SK-N-SH (cell line): ENCODE measurements at regions of chr17 and their contacts with region 1.

Region 1: DNA sequence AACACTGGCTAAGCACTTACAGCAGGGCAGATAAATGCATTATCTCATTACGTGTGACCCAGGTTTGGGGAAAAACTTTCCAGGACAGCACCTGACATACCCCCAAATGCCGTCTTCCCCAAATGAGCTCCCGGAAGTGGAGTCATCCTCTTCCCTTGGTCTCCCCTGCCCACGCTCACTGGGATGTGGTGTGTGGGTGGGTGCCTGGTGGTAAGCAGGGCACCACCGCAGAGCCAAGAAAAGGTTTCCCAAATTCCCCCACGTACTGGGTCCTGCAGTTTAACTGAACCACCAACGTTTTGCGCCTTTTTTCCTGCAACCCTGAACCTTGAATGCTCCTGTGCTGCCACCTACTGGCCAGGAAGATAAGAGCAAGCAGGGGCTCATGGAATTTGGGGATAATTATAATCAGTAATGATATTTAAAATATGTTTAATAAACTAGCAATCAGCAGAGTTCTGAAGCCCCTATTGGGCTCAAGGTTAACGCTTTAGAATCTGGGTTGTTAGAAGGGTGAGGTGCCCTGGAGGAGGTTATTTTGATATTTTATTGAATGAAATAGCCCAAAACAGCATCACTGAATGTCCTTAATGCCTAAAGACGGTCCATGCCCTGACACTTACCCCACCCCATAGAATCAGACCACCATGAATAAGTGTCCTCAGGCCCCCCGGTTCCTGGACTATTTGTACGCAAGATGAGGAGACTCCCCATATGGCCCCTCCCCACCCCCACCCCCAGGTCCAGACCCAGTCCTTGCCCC is 8.0 kb downstream of the SPPL2C start:
- DNase-seq: peak; percentile 84
- H3K4me3 ChIP-seq: no peak overlapping the region; a peak in 1 of 4 replicates
- H3K27ac ChIP-seq: no peak overlapping the region
- H3K4me1 ChIP-seq: peaks cover 0 to 15% of the 10 kb centered on the region in 2 experiments; a peak in 1 of 4 replicates
- H3K27me3 ChIP-seq: peaks cover 6% of the 10 kb centered on the region; the same call in 1 of the 2 replicates
- CTCF ChIP-seq: peak; percentile 100
- EP300 ChIP-seq: no peak
- RAD21 ChIP-seq: peak; percentile 97

Region 2: GRCh38 chr17:45394913-45395568 is 457.7 kb before region 1 on chr17:
- CTCF ChIA-PET with region 1: interaction called, 12 read pairs
- POLR2A ChIA-PET with region 1: no interaction called
- DNase-seq: peak; percentile 95
- H3K4me3 ChIP-seq: no peak overlapping the region; a peak in 1 of 4 replicates
- H3K27ac ChIP-seq: no peak overlapping the region
- H3K4me1 ChIP-seq: peaks cover 0 to 8% of the 10 kb centered on the region in 2 experiments; a peak in 1 of 4 replicates
- H3K27me3 ChIP-seq: no peaks in the 10 kb centered on the region
- CTCF ChIP-seq: peak; percentile 76
- EP300 ChIP-seq: no peak
- RAD21 ChIP-seq: peak; percentile 83

Region 3: DNA sequence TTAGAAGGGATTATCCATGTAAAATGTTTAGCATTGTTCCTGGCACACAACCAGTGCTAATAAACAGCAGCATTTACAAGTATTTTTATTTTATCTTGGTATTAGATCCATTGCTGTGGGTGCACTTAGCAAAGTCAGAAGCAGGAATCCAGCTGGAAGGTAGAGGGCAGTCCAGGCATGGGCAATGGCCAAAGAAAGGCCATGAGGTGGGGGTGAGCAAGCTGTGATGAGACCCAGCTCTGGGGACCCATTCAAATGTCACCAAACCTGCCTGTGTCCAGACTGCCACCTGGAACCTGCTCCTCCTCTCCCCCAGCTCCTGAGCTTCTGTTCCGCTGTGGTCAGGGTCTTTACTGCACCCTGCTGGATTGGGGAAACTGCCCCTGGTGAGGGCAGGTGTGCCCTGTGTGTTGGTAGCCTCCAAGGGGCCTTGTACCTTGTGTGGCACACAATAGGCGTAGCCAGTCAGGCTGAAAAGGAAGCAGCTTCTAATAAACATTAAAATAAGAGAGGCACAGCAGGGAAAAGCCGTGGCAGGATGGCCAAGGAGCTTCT is 186.6 kb before region 1 on chr17:
- CTCF ChIA-PET with region 1: interaction called, 16 read pairs
- POLR2A ChIA-PET with region 1: no interaction called
- DNase-seq: no peak
- H3K4me3 ChIP-seq: no peak overlapping the region
- H3K27ac ChIP-seq: no peak overlapping the region
- H3K4me1 ChIP-seq: no peaks in the 10 kb centered on the region
- H3K27me3 ChIP-seq: peaks cover 23% of the 10 kb centered on the region
- CTCF ChIP-seq: no peak
- EP300 ChIP-seq: no peak
- RAD21 ChIP-seq: peak; percentile 60

Region 4: GRCh38 chr17:45782889-45783592 is 69.7 kb before region 1 on chr17:
- CTCF ChIA-PET with region 1: interaction called, 27 read pairs
- POLR2A ChIA-PET with region 1: no interaction called
- DNase-seq: peak; percentile 94
- H3K4me3 ChIP-seq: peak overlapping the region; percentile 43 to 65
- H3K27ac ChIP-seq: no peak overlapping the region
- H3K4me1 ChIP-seq: peaks cover 4 to 24% of the 10 kb centered on the region in 2 experiments; a peak in 1 of 4 replicates
- H3K27me3 ChIP-seq: peaks cover 43% of the 10 kb centered on the region
- CTCF ChIP-seq: peak; percentile 71
- EP300 ChIP-seq: no peak
- RAD21 ChIP-seq: peak; percentile 37

Region 5: GRCh38 chr17:45867702-45868101 is 15.0 kb after region 1 on chr17:
- CTCF ChIA-PET with region 1: interaction called, 87 read pairs
- POLR2A ChIA-PET with region 1: no interaction called
- DNase-seq: no peak
- H3K4me3 ChIP-seq: no peak overlapping the region
- H3K27ac ChIP-seq: no peak overlapping the region
- H3K4me1 ChIP-seq: no peaks in the 10 kb centered on the region
- H3K27me3 ChIP-seq: peaks cover 51% of the 10 kb centered on the region
- CTCF ChIP-seq: no peak
- EP300 ChIP-seq: no peak
- RAD21 ChIP-seq: no peak

Region 6: DNA sequence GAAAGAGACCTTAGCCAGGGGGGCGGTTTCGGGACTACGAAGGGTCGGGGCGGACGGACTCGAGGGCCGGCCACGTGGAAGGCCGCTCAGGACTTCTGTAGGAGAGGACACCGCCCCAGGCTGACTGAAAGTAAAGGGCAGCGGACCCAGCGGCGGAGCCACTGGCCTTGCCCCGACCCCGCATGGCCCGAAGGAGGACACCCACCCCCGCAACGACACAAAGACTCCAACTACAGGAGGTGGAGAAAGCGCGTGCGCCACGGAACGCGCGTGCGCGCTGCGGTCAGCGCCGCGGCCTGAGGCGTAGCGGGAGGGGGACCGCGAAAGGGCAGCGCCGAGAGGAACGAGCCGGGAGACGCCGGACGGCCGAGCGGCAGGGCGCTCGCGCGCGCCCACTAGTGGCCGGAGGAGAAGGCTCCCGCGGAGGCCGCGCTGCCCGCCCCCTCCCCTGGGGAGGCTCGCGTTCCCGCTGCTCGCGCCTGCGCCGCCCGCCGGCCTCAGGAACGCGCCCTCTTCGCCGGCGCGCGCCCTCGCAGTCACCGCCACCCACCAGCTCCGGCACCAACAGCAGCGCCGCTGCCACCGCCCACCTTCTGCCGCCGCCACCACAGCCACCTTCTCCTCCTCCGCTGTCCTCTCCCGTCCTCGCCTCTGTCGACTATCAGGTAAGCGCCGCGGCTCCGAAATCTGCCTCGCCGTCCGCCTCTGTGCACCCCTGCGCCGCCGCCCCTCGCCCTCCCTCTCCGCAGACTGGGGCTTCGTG is 41.5 kb after region 1 on chr17 and contains the start of gene MAPT:
- CTCF ChIA-PET with region 1: interaction called, 23 read pairs
- POLR2A ChIA-PET with region 1: no interaction called
- DNase-seq: peak; percentile 100
- H3K4me3 ChIP-seq: peak within 1 kb of the TSS; percentile 77 to 92
- H3K27ac ChIP-seq: peak within 1 kb of the TSS in 1 of 2 experiments; percentile 71; a peak in 1 of 4 replicates
- H3K4me1 ChIP-seq: peaks cover 0 to 19% of the 10 kb centered on the region in 2 experiments; a peak in 1 of 4 replicates
- H3K27me3 ChIP-seq: peaks cover 42% of the 10 kb centered on the region
- CTCF ChIP-seq: peak; percentile 83
- EP300 ChIP-seq: no peak; a peak in 1 of 4 replicates
- RAD21 ChIP-seq: peak; percentile 51
- polyA plus RNA-seq, gene MAPT: 0.47 and 0.74 TPM in 2 replicates